ENCODE measurements at regions of chr21 and their contacts with region 1.

Region 1: GRCh38 chr21:36060159-36060921 is at the start of gene SETD4:
- DNase-seq: peak; percentile 80 to 97 (median 92)
- ATAC-seq: peak; percentile 87
- H3K4me3 ChIP-seq: peak within 1 kb of the TSS; percentile 88 to 99
- H3K4me3 Mint-ChIP-seq: peak within 1 kb of the TSS; percentile 96
- H3K27ac ChIP-seq: peak within 1 kb of the TSS; percentile 69 to 90
- H3K27ac Mint-ChIP-seq: peak within 1 kb of the TSS; percentile 98
- H3K4me1 ChIP-seq: peaks cover 4% of the 10 kb centered on the region
- H3K4me1 Mint-ChIP-seq: peaks cover 27% of the 10 kb centered on the region
- H3K27me3 ChIP-seq: no peaks in the 10 kb centered on the region
- H3K27me3 Mint-ChIP-seq: no peaks in the 10 kb centered on the region
- CTCF ChIP-seq: no peak
- total RNA-seq, gene SETD4: 13.9 to 15.4 TPM

Region 2: GRCh38 chr21:34614633-34615486 is 1445.5 kb before region 1 on chr21 and contains the start of gene RCAN1:
- CTCF ChIA-PET with region 1: no interaction called
- POLR2A ChIA-PET with region 1: no interaction called
- intact Hi-C with region 1: loop called in 1 of 2 experiments (anchors 5 kb)
- DNase-seq: peak; percentile 64 to 94 (median 85)
- ATAC-seq: peak; percentile 95
- H3K4me3 ChIP-seq: peak within 1 kb of the TSS; percentile 51 to 63
- H3K4me3 Mint-ChIP-seq: peak within 1 kb of the TSS; percentile 90
- H3K27ac ChIP-seq: peak within 1 kb of the TSS; percentile 41 to 68
- H3K27ac Mint-ChIP-seq: peak within 1 kb of the TSS; percentile 91
- H3K4me1 ChIP-seq: peaks cover 13% of the 10 kb centered on the region
- H3K4me1 Mint-ChIP-seq: peaks cover 21% of the 10 kb centered on the region
- H3K27me3 ChIP-seq: no peaks in the 10 kb centered on the region
- H3K27me3 Mint-ChIP-seq: no peaks in the 10 kb centered on the region
- CTCF ChIP-seq: no peak
- total RNA-seq, gene RCAN1: 0.73 to 1.0 TPM

Region 3: DNA sequence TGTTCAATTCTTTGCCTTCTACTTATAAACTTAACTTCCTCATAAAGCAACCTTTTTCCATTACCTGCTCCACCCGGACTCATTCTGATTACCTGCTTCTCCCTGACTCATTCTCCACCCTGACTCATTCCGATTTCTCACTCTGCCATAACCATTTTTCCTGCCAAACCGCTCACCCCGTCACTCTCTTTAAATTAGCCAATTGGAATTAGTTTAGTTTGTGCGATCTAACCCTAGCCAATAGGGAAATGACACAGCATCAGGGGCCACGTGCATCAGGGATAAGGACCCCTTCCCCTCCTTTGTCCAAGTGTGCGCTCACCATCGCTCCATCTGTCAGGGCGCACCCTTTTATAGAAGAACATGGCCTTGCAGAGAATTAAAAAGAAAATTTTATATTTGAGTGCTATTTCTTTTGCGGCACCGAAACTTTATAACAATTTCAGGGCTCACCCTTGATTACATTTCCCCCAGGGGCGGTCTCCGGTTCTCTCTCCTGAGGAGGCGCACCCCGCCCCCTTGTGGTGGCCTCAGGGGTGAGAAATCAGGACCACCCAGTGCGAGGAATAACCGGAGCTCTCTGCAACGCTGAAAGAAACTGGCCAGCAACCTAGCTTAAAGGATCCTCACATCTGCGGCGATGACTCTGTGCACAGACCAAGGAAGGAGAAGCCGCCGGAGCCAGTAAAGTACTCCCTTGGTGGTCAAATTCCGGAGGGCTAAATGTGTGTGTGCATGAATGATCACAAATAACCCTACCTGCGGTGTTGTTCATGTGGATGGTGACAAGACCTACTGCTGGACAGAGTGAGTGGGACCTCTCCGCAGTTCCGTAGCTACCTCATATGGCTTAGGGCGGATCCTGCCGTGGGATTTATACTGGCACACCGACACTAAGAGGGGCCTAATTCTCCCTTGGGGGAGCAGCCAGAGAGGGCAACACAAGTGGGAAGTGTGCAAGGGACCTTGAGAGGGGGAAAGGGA is 44.3 kb after region 1 on chr21:
- CTCF ChIA-PET with region 1: interaction called, 7 read pairs
- POLR2A ChIA-PET with region 1: interaction called, 4 read pairs
- intact Hi-C with region 1: loop called in 1 of 2 experiments (anchors 2 kb)
- DNase-seq: peak; percentile 20 to 79 (median 69)
- ATAC-seq: peak; percentile 87
- H3K4me3 ChIP-seq: no peak overlapping the region
- H3K4me3 Mint-ChIP-seq: peak overlapping the region; percentile 3
- H3K27ac ChIP-seq: no peak overlapping the region
- H3K27ac Mint-ChIP-seq: no peak overlapping the region
- H3K4me1 ChIP-seq: no peaks in the 10 kb centered on the region
- H3K4me1 Mint-ChIP-seq: peaks cover 7% of the 10 kb centered on the region
- H3K27me3 ChIP-seq: peaks cover 0 to 7% of the 10 kb centered on the region in 2 experiments
- H3K27me3 Mint-ChIP-seq: peaks cover 21% of the 10 kb centered on the region
- CTCF ChIP-seq: peak; percentile 63

Region 4: GRCh38 chr21:36135391-36136102 is 75.2 kb after region 1 on chr21:
- CTCF ChIA-PET with region 1: no interaction called
- POLR2A ChIA-PET with region 1: no interaction called
- intact Hi-C with region 1: loop called in 1 of 2 experiments (anchors 2 kb)
- DNase-seq: peak in 7 of 9 experiments; percentile 37 to 74 (median 56)
- ATAC-seq: peak; percentile 72
- H3K4me3 ChIP-seq: peak overlapping the region; percentile 68 to 77
- H3K4me3 Mint-ChIP-seq: peak overlapping the region; percentile 93
- H3K27ac ChIP-seq: peak overlapping the region; percentile 34 to 38
- H3K27ac Mint-ChIP-seq: peak overlapping the region; percentile 87
- H3K4me1 ChIP-seq: peaks cover 20% of the 10 kb centered on the region
- H3K4me1 Mint-ChIP-seq: peaks cover 19% of the 10 kb centered on the region
- H3K27me3 ChIP-seq: no peaks in the 10 kb centered on the region
- H3K27me3 Mint-ChIP-seq: no peaks in the 10 kb centered on the region
- CTCF ChIP-seq: no peak

Region 5: DNA sequence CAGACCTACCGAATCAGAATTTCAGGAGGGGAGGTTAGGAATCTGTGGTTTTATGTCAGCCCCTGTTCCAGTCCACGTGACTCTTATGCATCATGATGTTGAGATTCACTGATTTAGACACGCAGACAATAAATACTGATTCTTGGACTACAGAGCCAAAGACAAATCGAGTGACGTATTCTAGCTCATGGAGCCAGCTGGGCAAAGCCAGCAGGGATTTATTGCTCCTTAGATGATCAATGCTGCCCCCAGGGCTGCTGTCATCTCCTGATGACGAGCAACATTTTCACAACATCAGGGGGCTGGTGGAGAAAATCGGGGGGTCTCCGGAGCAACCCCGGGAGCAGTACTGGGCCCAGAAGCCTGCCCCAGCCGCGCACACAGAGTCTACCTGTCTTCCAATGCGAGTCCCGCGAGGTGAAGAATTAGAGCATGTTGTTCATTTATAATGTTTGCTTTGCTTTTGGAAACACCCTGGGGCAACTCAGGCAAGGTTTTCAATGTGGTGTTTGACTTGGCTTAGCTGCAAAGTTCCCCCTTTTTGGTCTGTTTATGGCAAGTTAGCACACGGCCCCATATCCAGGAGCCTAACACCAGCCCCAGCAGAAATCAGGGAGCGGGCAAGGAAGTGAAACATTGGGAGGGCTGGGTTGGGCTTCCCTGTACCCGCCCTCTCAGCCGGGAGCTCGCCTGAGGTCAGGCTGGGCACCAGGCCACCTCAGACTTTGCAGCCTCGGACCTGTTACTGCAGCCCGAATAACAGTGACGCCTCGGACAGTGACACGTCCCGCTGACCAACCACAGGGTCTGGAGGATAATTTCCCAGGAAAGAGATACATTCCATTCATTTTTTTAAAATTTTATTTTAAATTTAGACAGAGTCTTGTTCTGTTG is 439.5 kb after region 1 on chr21:
- CTCF ChIA-PET with region 1: no interaction called
- POLR2A ChIA-PET with region 1: no interaction called
- intact Hi-C with region 1: no loop called
- DNase-seq: no peak
- ATAC-seq: no peak
- H3K4me3 ChIP-seq: no peak overlapping the region
- H3K4me3 Mint-ChIP-seq: no peak overlapping the region
- H3K27ac ChIP-seq: no peak overlapping the region
- H3K27ac Mint-ChIP-seq: no peak overlapping the region
- H3K4me1 ChIP-seq: no peaks in the 10 kb centered on the region
- H3K4me1 Mint-ChIP-seq: no peaks in the 10 kb centered on the region
- H3K27me3 ChIP-seq: no peaks in the 10 kb centered on the region
- H3K27me3 Mint-ChIP-seq: peaks cover under 1% of the 10 kb centered on the region
- CTCF ChIP-seq: no peak

Region 6: DNA sequence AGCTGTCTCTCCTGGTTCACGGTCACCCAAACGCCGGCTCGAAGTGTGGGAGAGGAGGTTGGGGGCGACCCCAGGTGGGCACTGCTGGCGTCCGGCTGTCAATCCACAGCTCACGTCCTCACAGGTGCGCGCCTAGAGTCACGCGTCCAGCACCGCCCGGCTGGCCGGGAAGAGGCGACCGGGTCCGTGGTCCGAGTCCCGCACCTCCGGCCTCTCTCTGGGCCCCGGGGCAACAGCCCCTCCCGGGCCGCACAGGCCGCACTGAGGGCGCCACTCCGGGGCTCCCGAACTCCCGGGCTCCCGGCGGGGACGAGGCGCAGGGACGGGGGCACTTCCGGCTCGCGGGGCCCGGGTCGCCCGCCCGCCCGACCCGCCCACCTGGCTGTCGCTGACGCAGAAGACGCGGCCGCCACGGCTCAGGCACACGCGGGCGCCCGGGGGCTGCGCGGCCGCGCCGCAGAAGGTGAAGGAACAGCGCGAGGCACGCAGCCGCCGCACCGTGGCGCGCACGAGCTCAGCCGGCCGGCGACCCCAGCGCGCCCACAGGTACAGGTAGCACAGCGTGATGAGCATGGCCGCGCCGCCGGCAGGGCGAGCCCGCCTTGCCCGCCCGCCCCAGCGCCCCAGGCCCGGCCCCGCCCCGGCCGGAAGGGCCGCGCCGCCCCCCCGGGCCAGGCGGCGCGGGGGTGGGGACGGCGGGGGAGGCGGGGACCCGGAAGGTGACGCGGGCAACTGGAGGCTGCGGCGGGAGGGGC is 905.9 kb after region 1 on chr21 and contains the start of gene HLCS:
- CTCF ChIA-PET with region 1: no interaction called
- POLR2A ChIA-PET with region 1: no interaction called
- intact Hi-C with region 1: loop called in 1 of 2 experiments (anchors 5 kb)
- DNase-seq: peak; percentile 43 to 90 (median 74)
- ATAC-seq: peak; percentile 90
- H3K4me3 ChIP-seq: peak within 1 kb of the TSS; percentile 65 to 66
- H3K4me3 Mint-ChIP-seq: peak within 1 kb of the TSS; percentile 85
- H3K27ac ChIP-seq: peak within 1 kb of the TSS; percentile 63 to 69
- H3K27ac Mint-ChIP-seq: peak within 1 kb of the TSS; percentile 90
- H3K4me1 ChIP-seq: peaks cover 10% of the 10 kb centered on the region
- H3K4me1 Mint-ChIP-seq: peaks cover 21% of the 10 kb centered on the region
- H3K27me3 ChIP-seq: no peaks in the 10 kb centered on the region
- H3K27me3 Mint-ChIP-seq: no peaks in the 10 kb centered on the region
- CTCF ChIP-seq: peak; percentile 36
- total RNA-seq, gene HLCS: 9.7 to 13.6 TPM

Measured in CD8-positive, alpha-beta T cell (primary cell).